ENCODE measurements at regions of chr1 and their contacts with region 1.

Region 1: DNA sequence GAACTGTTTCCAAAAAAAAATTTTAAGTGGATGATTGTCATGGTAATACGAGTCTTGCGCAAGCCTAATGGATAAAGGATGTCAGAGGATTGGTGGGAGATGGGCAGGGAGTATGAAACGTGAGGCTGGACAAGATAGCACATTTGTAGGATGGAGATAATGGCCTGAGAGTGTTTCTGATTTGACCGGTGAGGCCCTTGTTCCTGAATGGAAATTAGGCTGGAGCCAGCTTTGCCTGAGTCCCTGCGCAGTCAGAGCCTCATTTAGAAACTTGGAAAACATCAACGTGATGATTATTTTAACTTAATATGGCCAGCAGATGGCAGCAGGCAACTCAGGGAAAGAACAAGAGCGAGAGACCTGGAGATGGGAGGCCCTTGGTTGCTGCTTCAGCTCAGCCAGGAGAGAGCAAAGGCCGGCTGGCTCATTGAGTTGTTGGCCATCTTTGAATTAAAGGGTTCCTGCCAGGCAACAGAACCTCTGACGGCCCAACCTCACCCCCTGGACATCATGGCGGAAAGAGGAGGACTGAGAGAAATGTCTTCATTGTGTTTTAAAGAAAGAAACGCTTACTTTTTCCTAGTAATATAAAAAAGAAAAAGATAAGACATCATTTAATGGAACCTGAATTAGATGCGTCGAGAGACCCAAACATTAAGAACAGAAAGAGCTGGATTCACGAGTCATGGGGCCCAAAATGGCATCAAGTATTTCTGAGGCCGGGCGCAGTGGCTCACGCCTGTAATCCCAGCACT is 80.3 kb downstream of the SELENOF start:
- DNase-seq: peak in 1 of 2 donors; percentile 89
- H3K4me3 ChIP-seq: no peak overlapping the region
- H3K27ac ChIP-seq: no peak overlapping the region
- H3K4me1 ChIP-seq: no peaks in the 10 kb centered on the region
- H3K27me3 ChIP-seq: no peaks in the 10 kb centered on the region
- CTCF ChIP-seq: peak; percentile 17 to 60 (median 47)
- POLR2A ChIP-seq: no peak

Region 2: DNA sequence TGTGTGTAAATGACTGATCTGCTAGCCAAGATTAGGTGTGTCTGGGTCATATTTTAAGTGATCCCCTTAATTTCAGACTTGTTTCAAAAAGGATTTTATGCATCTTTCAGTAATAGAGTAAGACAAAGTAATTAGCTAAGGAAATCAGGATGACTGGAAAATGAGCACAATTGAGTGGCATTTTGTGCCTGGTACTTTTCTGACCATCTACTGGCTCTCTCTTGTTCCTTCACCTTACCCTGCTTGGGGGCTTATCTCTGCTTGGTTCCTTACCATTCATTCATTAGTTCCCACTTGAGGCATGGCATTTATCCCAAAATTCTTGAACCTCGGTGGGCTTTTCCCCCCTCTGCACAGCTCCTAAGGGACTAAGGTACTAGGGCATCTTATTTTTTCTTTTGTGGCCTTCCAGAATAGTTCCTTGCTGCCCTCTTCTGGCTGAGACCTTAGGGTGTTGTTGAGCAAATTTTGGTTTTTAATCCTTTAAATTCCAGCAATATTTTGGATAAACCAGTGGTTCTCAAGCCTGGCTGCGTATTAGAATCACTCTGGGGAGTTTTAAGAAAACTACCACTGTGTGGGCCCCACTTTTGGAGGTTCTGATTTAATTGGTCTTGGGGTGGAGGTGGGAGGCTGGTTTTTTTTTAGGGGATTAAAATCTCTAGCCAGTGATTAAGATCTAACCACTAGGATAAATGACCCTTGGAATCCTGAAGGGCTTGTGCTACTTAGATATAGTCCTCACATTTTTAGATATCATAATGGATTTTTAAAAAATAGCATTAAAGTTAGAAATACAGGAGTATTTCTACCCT is 131.6 kb after region 1 on chr1:
- intact Hi-C with region 1: loop called (anchors 10 kb)
- DNase-seq: no peak
- H3K4me3 ChIP-seq: no peak overlapping the region
- H3K27ac ChIP-seq: no peak overlapping the region
- H3K4me1 ChIP-seq: no peaks in the 10 kb centered on the region
- H3K27me3 ChIP-seq: no peaks in the 10 kb centered on the region
- CTCF ChIP-seq: peak; percentile 23 to 51 (median 37)
- POLR2A ChIP-seq: no peak

Measured in vagina (tissue), 2 donors.